ENCODE measurements at regions of chr12 and their contacts with region 1.

Region 1: GRCh38 chr12:76410781-76411180 is 62.6 kb upstream of the BBS10 start:
- DNase-seq: no peak
- H3K4me3 Mint-ChIP-seq: no peak overlapping the region
- H3K27ac Mint-ChIP-seq: no peak overlapping the region
- H3K4me1 Mint-ChIP-seq: peaks cover 7% of the 10 kb centered on the region
- H3K27me3 Mint-ChIP-seq: no peaks in the 10 kb centered on the region
- CTCF ChIP-seq: no peak

Region 2: DNA sequence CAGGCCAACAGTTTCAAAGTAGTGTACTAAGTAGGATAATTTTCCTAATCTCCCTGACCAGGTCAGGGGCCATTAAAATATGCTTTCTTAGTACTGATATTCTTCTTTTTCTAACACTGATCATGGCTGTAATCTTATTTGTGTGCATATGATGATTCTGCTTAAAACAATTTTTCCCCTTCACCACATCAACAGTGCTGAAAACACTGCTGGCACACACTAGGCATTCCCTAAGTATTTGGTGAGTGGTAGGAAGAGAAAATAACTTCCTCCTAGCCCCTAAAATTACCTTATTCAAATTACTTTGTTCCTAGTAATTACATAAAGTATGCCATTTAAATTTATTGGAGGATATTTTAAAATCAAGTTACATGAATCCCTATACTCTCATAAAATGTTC is 12.7 kb before region 1 on chr12:
- CTCF ChIA-PET with region 1: no interaction called
- POLR2A ChIA-PET with region 1: interaction called, 3 read pairs
- intact Hi-C with region 1: loop called (anchors 1 kb)
- DNase-seq: no peak
- H3K4me3 Mint-ChIP-seq: no peak overlapping the region
- H3K27ac Mint-ChIP-seq: no peak overlapping the region
- H3K4me1 Mint-ChIP-seq: no peaks in the 10 kb centered on the region
- H3K27me3 Mint-ChIP-seq: no peaks in the 10 kb centered on the region
- CTCF ChIP-seq: no peak

Region 3: GRCh38 chr12:76519538-76519937 is 108.8 kb after region 1 on chr12:
- CTCF ChIA-PET with region 1: no interaction called
- POLR2A ChIA-PET with region 1: no interaction called
- intact Hi-C with region 1: no loop called
- DNase-seq: peak; percentile 4
- H3K4me3 Mint-ChIP-seq: no peak overlapping the region
- H3K27ac Mint-ChIP-seq: no peak overlapping the region
- H3K4me1 Mint-ChIP-seq: no peaks in the 10 kb centered on the region
- H3K27me3 Mint-ChIP-seq: no peaks in the 10 kb centered on the region
- CTCF ChIP-seq: no peak